GM23248 (cell line): ENCODE measurements at regions of chr7 and their contacts with region 1.

Region 1: DNA sequence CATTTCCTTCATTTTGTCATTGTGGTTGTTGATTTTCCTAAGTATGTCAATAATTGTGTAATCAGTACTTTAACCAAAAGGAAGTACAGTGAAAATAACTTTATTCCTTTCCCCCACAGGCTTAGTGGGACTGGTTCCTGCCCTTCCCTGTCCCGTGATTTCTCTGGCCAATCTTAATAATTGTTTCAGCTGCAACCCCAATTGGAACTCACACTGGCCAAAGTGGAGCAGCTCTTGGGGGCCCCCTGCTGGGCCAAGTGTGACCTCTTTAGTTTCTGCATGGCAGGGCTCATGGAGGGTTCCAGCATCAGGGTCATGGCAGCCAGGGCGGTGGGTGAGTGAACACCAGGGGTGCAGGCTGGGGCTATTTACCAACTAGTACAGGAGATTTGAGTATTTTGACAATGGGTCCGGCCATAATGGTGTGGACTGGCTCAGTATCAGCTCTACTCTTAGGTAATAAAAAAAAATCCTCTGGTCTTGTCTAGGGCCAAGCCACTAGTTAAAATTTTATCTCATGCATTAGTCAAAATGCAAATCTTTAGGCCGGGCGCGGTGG is 31.7 kb downstream of the CYCS start:
- DNase-seq: peak; percentile 85
- H3K4me3 ChIP-seq: no peak overlapping the region
- H3K27ac ChIP-seq: no peak overlapping the region
- H3K4me1 ChIP-seq: no peaks in the 10 kb centered on the region
- H3K27me3 ChIP-seq: no peaks in the 10 kb centered on the region

Region 2: DNA sequence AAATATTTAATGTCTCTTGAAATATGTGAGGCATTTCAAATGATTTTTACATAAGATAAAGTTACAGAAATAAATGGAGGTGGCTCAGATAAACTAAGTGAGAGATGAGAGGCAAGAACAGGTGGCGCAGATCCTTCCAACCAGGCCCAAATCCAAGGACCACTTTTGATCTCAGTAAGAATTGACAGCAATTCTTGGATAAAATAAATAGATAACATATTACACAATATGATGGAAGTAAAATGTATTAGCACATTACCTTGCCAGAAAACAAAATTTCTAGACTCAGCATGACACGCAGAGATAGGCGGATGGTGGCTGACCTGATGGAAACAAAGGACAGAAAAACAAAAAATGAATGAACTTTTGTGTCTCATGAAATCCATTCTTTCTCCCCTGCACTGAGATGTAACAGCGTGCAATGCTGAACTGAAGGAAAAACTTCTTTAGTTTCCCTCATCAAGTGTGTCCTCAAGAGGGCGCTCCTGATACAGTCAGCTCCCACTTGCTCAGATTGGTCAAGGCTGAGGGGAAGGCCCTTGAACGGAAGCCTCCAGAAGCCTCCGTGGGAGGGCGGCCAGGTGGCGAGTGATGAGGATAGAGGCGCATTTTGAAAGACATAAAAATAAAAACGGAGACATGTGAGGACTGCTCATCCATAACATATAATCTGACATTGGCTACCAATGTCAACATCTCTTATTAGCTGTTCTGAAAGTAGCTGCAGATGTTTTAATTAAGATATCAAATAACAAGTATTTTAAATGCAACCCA is 273.2 kb before region 1 on chr7:
- in situ Hi-C with region 1: loop called (anchors 5 kb)
- DNase-seq: peak; percentile 93
- H3K4me3 ChIP-seq: peak overlapping the region; percentile 32; the same call in 1 of the 2 replicates
- H3K27ac ChIP-seq: peak overlapping the region; percentile 94
- H3K4me1 ChIP-seq: peaks cover 36% of the 10 kb centered on the region
- H3K27me3 ChIP-seq: no peaks in the 10 kb centered on the region

Region 3: GRCh38 chr7:25369786-25370185 is 276.4 kb after region 1 on chr7:
- in situ Hi-C with region 1: no loop called
- DNase-seq: no peak
- H3K4me3 ChIP-seq: no peak overlapping the region
- H3K27ac ChIP-seq: no peak overlapping the region
- H3K4me1 ChIP-seq: no peaks in the 10 kb centered on the region
- H3K27me3 ChIP-seq: no peaks in the 10 kb centered on the region